Activated naive CD4-positive, alpha-beta T cell treated with anti-CD3 and anti-CD28 coated beads for 36 hours (primary cell): ENCODE measurements at regions of chr2 and their contacts with region 1.

Region 1: GRCh38 chr2:74482801-74483674 is at the starts of genes CCDC142 and TTC31:
- DNase-seq: peak; percentile 97
- H3K4me3 Mint-ChIP-seq: peak within 1 kb of the TSS; percentile 93
- H3K27ac Mint-ChIP-seq: peak within 1 kb of the TSS; percentile 98
- H3K4me1 Mint-ChIP-seq: peaks cover 32% of the 10 kb centered on the region
- H3K27me3 Mint-ChIP-seq: no peaks in the 10 kb centered on the region
- total RNA-seq, gene CCDC142: 3.7 to 5.8 TPM
- total RNA-seq, gene TTC31: 29.5 to 30.6 TPM

Region 2: DNA sequence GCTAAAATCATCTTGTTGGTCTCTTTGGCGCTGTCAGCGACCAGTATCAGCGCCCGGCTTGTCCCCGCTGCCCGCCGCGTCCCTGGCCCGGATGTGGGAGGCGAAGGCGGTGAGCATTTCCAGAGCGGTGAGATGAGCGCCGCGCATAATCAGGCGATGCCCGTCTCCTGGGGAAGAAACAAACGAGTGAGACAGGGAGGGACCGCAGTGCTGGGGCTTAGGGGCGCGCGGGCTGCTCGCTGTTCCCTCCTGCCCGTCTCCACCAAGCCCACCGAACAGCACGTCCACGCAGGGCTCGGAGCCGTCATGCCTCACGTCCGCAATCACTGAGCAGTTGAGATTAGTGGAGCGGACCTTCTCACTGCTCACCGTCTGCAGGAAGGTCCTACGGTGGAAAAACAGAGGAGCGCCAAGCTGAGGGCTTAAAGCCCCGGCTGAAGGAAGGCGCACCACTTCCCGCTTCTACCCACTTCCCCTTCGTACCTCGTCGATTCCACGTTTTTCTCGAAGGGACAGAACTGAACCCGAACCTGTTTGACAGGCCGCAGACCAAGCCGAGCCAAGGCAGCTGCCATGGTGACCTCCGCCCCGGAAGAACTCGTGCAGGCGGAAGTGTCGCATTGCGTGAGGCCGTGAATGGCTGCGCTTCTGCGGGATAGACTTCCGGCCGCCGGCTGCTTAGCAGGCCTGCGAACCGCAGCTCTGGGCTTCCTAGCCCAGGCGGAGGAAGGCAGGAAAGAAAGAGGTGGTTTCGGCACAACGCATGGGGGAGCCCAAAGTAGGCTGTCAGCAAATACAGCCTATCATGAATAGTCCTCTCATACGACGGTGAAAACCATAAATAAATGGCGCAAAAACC is 10.7 kb before region 1 on chr2 and contains the start of gene MRPL53:
- CTCF ChIA-PET with region 1: interaction called, 31 read pairs
- intact Hi-C with region 1: loop called (anchors 1 kb)
- DNase-seq: peak; percentile 97
- H3K4me3 Mint-ChIP-seq: peak within 1 kb of the TSS; percentile 98
- H3K27ac Mint-ChIP-seq: peak within 1 kb of the TSS; percentile 98
- H3K4me1 Mint-ChIP-seq: peaks cover 20% of the 10 kb centered on the region
- H3K27me3 Mint-ChIP-seq: no peaks in the 10 kb centered on the region
- total RNA-seq, gene MRPL53: 112 to 117 TPM

Region 3: DNA sequence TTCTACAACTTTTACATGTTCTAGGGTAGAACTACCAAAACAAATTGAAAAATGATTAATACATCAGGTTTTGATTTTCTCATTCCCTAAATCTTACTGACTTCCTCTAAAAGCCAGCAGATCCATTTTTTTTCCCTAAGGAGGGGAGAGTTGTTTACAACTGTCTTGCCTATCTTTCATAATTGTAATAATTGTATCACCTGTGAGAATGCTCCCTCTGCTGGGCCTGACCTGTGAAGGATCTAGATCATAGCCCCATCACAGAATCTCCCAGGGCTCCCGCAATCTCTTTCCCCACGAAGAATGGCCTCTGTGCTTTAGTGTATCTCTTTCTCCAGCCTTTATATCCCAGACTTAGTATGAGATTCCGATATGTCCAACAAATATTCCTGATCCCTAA is 61.6 kb after region 1 on chr2:
- CTCF ChIA-PET with region 1: interaction called, 4 read pairs
- intact Hi-C with region 1: loop called (anchors 1 kb)
- DNase-seq: peak; percentile 48
- H3K4me3 Mint-ChIP-seq: no peak overlapping the region
- H3K27ac Mint-ChIP-seq: no peak overlapping the region
- H3K4me1 Mint-ChIP-seq: peaks cover 3% of the 10 kb centered on the region
- H3K27me3 Mint-ChIP-seq: peaks cover 35% of the 10 kb centered on the region

Region 4: DNA sequence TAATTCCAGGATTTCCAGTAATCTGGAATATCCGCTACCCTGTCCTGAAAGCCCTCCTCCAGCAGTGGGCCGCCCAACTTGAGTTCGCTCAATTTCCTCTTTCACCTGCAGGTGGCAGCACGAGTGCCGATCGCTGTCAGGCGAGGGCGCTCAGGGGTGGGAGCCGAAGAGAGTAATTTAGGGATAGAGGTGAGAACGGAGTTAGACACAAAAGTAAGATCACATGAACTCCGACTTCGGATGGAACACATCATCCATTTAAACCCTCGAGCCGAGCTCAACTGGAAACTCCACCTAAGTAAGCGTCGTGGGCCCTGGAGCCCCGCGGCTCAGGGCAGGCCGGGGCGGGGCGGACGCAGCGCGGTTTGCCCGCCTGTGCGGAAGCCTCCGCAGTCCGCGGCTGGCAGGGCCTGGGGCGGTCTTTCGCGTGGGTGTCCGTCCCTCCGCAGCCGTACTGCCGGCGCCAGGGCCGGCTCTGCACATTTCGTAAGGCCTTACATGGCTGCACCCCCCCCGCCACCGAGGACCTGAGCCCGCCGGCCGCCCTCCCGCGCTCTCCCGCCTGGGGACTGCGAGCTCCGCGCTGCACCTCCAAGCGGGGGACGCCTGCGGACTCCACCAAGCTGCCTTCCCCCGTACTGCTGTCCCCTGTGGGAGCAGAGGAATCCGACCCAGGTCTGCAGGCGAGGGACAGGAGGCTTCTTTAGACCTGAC is 232.2 kb after region 1 on chr2:
- CTCF ChIA-PET with region 1: no interaction called
- intact Hi-C with region 1: loop called (anchors 5 kb)
- DNase-seq: peak; percentile 88
- H3K4me3 Mint-ChIP-seq: peak overlapping the region; percentile 81
- H3K27ac Mint-ChIP-seq: no peak overlapping the region
- H3K4me1 Mint-ChIP-seq: peaks cover 7% of the 10 kb centered on the region
- H3K27me3 Mint-ChIP-seq: peaks cover 11% of the 10 kb centered on the region